Calu3 (cell line): ENCODE measurements at regions of chr6 and their contacts with region 1.

Region 1: GRCh38 chr6:41735427-41736356 is at the start of gene TFEB:
- DNase-seq: peak; percentile 98
- H3K4me3 Mint-ChIP-seq: peak within 1 kb of the TSS; percentile 76
- H3K27ac Mint-ChIP-seq: no peak within 1 kb of the TSS
- H3K4me1 Mint-ChIP-seq: peaks cover 15% of the 10 kb centered on the region
- H3K27me3 Mint-ChIP-seq: no peaks in the 10 kb centered on the region
- CTCF ChIP-seq: peak; percentile 95
- total RNA-seq, gene TFEB: 4.4 and 6.6 TPM in 2 replicates

Region 2: GRCh38 chr6:41713161-41713649 is 22.5 kb before region 1 on chr6:
- CTCF ChIA-PET with region 1: interaction called, 22 read pairs
- intact Hi-C with region 1: no loop called
- DNase-seq: peak; percentile 85
- H3K4me3 Mint-ChIP-seq: peak overlapping the region; percentile 8
- H3K27ac Mint-ChIP-seq: no peak overlapping the region
- H3K4me1 Mint-ChIP-seq: peaks cover 39% of the 10 kb centered on the region
- H3K27me3 Mint-ChIP-seq: no peaks in the 10 kb centered on the region
- CTCF ChIP-seq: no peak